ENCODE measurements at regions of chrX and their contacts with region 1.

Region 1: GRCh38 chrX:98357146-98357545 is 1473.4 kb downstream of the RPA4 start:
- DNase-seq: no peak
- ATAC-seq: no peak
- H3K4me3 ChIP-seq: no peak overlapping the region
- H3K27ac ChIP-seq: no peak overlapping the region
- H3K4me1 ChIP-seq: no peaks in the 10 kb centered on the region
- H3K27me3 ChIP-seq: no peaks in the 10 kb centered on the region
- CTCF ChIP-seq: no peak
- POLR2A ChIP-seq: no peak
- RAD21 ChIP-seq: no peak

Region 2: GRCh38 chrX:98114026-98114425 is 243.1 kb before region 1 on chrX:
- CTCF ChIA-PET with region 1: no interaction called
- POLR2A ChIA-PET with region 1: no interaction called
- dilution Hi-C with region 1: no loop called
- in situ Hi-C with region 1: no loop called
- intact Hi-C with region 1: no loop called
- DNase-seq: no peak
- ATAC-seq: no peak
- H3K4me3 ChIP-seq: no peak overlapping the region
- H3K27ac ChIP-seq: no peak overlapping the region
- H3K4me1 ChIP-seq: no peaks in the 10 kb centered on the region
- H3K27me3 ChIP-seq: no peaks in the 10 kb centered on the region; the same call in 1 of the 2 replicates
- CTCF ChIP-seq: no peak
- POLR2A ChIP-seq: no peak
- RAD21 ChIP-seq: no peak

Region 3: DNA sequence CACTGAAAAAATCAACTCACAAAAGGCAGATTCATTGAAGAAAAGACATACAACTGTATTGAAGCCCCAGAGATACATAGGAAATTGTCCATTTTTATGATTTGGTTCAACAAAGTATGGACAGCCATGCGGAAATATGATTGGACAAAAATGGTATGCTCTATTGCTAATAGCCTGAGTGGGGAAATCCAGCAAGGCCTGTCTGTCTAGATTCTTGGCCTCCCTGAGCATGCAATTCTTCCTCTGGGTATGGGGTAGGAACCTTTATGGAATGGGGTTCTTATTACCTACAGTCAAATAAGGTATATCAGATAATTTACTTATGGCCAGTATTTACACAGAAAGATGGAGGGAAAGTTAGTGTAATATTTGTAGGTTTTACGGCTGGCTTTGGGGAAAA is 29.1 kb before region 1 on chrX:
- CTCF ChIA-PET with region 1: no interaction called
- POLR2A ChIA-PET with region 1: no interaction called
- dilution Hi-C with region 1: no loop called
- in situ Hi-C with region 1: no loop called
- intact Hi-C with region 1: no loop called
- DNase-seq: no peak
- ATAC-seq: no peak
- H3K4me3 ChIP-seq: no peak overlapping the region
- H3K27ac ChIP-seq: no peak overlapping the region
- H3K4me1 ChIP-seq: no peaks in the 10 kb centered on the region
- H3K27me3 ChIP-seq: no peaks in the 10 kb centered on the region
- CTCF ChIP-seq: no peak
- POLR2A ChIP-seq: no peak
- RAD21 ChIP-seq: no peak

Region 4: DNA sequence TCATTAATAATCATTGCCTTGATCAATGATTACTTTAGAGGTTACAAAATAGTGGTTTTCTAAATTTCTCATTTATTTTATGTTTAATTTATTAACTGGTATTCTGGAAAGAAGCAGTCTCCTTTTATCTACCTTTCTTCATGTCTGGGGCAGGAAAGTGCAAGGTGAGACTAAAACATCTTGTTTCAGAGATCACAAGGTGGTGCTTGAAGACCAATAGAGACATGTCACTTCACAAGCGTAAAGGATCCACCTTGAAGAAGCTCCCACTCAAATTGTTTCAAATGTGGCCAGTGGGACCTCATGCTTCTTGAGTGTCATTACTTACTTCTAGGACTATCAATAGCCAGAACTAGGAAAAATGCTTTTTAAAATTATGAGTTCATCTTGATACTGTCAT is 95.3 kb after region 1 on chrX:
- CTCF ChIA-PET with region 1: no interaction called
- POLR2A ChIA-PET with region 1: no interaction called
- dilution Hi-C with region 1: no loop called
- in situ Hi-C with region 1: loop called (anchors 25 kb)
- intact Hi-C with region 1: no loop called
- DNase-seq: no peak
- ATAC-seq: no peak
- H3K4me3 ChIP-seq: no peak overlapping the region
- H3K27ac ChIP-seq: no peak overlapping the region
- H3K4me1 ChIP-seq: no peaks in the 10 kb centered on the region
- H3K27me3 ChIP-seq: no peaks in the 10 kb centered on the region
- CTCF ChIP-seq: no peak
- POLR2A ChIP-seq: no peak
- RAD21 ChIP-seq: no peak

Measured in IMR-90 (cell line).